Naive thymus-derived CD8-positive, alpha-beta T cell (primary cell): ENCODE measurements at regions of chr9 and their contacts with region 1.

Region 1: GRCh38 chr9:128552153-128552743 is at the start of gene SPTAN1:
- DNase-seq: peak; percentile 92 to 98 (median 96)
- ATAC-seq: peak; percentile 83
- H3K4me3 Mint-ChIP-seq: peak within 1 kb of the TSS in 9 of 10 donors; percentile 89 to 95 (median 92)
- H3K27ac Mint-ChIP-seq: peak within 1 kb of the TSS; percentile 91 to 99 (median 96)
- H3K4me1 Mint-ChIP-seq: peaks cover 12 to 36% (median 24%) of the 10 kb centered on the region in 4 donors
- H3K27me3 Mint-ChIP-seq: no peaks in the 10 kb centered on the region
- polyA plus RNA-seq, gene SPTAN1: 38.2 to 117 (median 57.5) TPM

Region 2: DNA sequence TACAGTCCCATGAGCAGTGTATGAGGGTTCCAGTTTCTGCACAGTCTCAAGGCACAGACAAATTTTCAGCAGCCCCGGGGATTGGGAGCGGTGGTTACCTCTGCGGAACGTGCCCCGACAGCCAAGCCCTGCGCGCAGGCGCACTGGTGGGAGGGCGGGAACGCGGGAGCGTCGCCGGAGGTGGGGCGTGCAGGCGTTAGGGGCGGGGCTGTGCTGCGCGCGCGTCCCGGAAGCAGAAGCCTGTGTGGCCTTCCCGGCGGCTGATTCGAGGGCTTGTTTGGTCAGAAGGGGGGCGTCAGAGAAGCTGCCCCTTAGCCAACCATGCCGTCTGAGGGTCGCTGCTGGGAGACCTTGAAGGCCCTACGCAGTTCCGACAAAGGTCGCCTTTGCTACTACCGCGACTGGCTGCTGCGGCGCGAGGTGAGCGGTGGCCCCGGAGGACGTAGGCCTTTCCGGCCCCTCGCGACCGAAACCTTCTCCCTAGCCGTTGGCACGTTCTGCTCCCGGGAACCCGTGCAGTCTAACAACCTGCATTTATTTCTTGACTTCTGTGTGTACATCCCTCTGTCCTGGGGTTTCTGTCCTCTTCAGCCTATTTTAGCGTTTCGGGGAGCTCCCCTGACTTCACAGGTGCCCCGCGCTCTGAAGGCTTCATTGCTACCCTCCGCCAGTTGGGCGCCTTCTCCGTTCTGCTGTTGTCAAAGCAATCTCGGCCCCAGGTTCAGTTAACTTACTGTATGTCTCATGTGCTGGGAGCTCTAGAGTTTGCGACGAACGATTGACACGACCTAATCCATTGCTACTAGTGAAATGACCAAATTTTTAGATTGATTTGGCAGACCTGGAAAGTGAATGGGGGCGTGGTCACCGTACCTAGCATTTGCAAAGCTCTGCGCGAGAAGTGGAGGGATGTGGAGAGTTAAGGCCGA is 47.5 kb before region 1 on chr9 and contains the start of gene GLE1:
- POLR2A ChIA-PET with region 1: interaction called, 19 read pairs
- DNase-seq: peak; percentile 92 to 100 (median 97)
- ATAC-seq: peak; percentile 89 to 91
- H3K4me3 Mint-ChIP-seq: peak within 1 kb of the TSS; percentile 94 to 100 (median 100)
- H3K27ac Mint-ChIP-seq: peak within 1 kb of the TSS; percentile 94 to 99 (median 99)
- H3K4me1 Mint-ChIP-seq: peaks cover 9 to 41% (median 34%) of the 10 kb centered on the region in 4 donors
- H3K27me3 Mint-ChIP-seq: no peaks in the 10 kb centered on the region
- polyA plus RNA-seq, gene GLE1: 17.4 to 27.9 (median 24.9) TPM